Panc1 (cell line): ENCODE measurements at regions of chr5 and their contacts with region 1.

Region 1: GRCh38 chr5:151805414-151806223 is 33.9 kb downstream of the G3BP1 start:
- DNase-seq: no peak
- ATAC-seq: no peak
- H3K4me3 ChIP-seq: no peak overlapping the region
- H3K27ac ChIP-seq: no peak overlapping the region
- H3K4me1 ChIP-seq: no peaks in the 10 kb centered on the region
- H3K27me3 ChIP-seq: no peaks in the 10 kb centered on the region
- CTCF ChIP-seq: no peak

Region 2: DNA sequence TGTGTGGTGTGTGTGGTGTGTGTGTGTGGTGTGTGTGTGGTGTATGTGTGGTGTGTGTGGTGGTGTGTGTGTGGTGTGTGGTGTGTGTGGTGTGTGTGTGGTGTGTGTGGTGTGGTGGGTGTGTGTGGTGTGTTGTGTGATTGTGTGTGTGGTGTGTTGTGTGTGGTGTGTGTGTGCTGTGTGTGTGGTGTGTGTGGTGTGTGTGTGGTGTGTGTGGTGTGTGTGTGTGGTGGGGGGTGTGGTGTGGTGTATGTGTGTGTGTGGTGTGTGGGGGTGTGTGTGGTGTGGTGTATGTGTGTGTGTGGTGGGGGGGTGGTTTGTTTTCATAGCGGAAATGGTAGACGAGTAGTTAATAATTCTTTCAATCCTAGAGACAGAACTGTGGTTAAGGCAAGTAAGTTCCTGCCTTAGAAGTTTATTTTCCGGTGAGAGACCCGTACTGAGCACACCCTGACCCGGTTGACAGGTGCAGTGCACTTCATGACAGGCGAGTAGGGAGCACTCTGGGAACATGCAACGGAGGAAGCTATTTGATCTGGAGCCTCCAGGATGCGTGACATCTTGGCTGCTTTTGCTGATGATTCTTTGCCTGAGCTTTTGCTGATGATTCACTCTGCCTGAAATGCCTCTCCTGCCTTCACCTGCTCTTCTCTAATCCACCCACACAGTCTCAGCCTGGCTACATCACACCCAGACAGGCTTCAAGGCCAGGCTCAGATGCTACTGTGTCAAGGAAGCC is 192.8 kb before region 1 on chr5:
- CTCF ChIA-PET with region 1: no interaction called
- POLR2A ChIA-PET with region 1: no interaction called
- in situ Hi-C with region 1: no loop called
- intact Hi-C with region 1: no loop called
- DNase-seq: no peak
- ATAC-seq: no peak
- H3K4me3 ChIP-seq: no peak overlapping the region
- H3K27ac ChIP-seq: no peak overlapping the region
- H3K4me1 ChIP-seq: 0 out of 2 replicates have a peak, but pooled peaks cover 2% of the 10 kb centered on the region
- H3K27me3 ChIP-seq: no peaks in the 10 kb centered on the region
- CTCF ChIP-seq: no peak

Region 3: DNA sequence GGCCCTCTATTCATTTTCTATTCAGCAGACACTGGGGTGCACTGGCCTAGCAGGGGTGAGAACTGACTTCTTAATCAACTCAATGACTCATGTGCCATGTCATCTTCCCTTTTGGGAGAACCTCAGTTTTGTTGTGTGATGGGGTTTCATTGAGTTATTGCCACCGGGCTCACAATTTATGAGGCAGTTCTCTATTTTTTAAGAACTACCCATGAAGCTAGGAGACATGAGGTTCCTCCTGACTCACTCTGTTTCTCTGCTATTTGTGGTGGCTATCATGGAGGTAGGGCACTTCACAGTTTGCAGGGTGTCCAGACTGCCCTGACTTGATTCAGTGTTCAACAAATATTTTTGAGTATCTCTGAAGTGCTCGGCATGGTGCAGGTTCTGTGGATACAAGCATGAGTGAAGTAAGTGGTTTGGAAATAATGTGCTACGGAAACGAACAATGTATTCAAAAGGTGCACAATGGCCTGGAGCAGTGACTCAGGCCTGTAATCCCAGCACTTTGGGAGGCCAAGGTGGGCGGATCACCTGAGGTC is 158.2 kb before region 1 on chr5:
- CTCF ChIA-PET with region 1: no interaction called
- POLR2A ChIA-PET with region 1: no interaction called
- in situ Hi-C with region 1: no loop called
- intact Hi-C with region 1: no loop called
- DNase-seq: no peak
- ATAC-seq: no peak
- H3K4me3 ChIP-seq: no peak overlapping the region
- H3K27ac ChIP-seq: no peak overlapping the region
- H3K4me1 ChIP-seq: no peaks in the 10 kb centered on the region
- H3K27me3 ChIP-seq: no peaks in the 10 kb centered on the region; the same call in 1 of the 2 replicates
- CTCF ChIP-seq: no peak

Region 4: DNA sequence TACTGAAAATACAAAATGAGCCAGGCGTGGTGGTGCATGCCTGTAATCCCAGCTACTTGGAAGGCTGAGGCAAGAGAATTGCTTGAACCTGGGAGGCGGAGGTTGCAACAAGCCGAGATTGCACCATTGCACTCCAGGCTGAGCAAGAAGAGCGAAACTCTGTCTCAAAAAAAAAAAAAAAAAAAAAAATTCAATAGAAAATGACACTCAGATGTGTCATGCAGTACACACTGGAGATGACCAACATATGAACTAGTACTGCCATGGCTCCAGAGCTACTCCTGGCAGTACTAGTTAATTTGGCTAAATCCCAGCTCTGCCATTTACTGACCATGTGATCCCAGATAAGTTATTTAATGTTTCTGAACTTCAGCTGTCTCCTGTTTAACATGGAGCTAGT is 54.5 kb before region 1 on chr5:
- CTCF ChIA-PET with region 1: no interaction called
- POLR2A ChIA-PET with region 1: interaction called, 12 read pairs
- in situ Hi-C with region 1: no loop called
- intact Hi-C with region 1: no loop called
- DNase-seq: no peak
- ATAC-seq: no peak
- H3K4me3 ChIP-seq: no peak overlapping the region
- H3K27ac ChIP-seq: no peak overlapping the region
- H3K4me1 ChIP-seq: peaks cover 12% of the 10 kb centered on the region
- H3K27me3 ChIP-seq: no peaks in the 10 kb centered on the region
- CTCF ChIP-seq: no peak

Region 5: DNA sequence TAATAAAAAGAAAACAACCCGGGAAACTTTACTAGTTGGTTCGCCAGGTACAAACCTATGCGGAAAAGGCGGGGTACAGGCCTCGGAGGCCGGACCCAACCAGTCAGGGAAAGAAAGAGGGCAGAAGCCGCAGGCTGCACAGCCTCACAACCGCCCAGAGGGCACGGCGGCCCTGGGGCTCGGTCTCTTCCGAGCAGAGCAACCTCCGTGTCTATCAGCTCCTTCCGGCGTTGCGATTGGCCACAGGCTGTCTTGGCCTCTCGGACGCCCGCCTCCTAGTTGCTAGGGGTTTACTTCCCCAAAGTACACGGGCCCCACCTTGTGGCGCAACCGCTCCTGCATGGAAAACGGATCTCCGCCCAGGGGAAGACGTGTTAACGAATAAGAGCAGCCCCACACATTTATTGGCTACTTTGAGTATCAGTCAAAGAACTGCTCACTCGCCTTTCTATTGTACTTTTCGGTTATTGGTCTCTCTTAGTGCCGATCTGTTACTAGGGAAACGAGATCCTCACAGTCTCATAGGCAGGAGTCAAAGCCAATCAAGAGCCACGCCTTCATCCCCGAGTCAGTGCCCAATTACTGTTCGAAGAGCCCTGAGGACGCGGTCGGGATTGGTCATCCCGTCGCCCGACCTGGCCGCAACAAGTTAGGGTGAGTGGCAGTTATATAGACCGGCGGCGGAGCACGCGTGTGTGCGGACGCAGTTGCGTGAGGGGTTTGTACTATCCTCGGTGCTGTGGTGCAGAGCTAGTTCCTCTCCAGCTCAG is 34.2 kb before region 1 on chr5 and contains the start of gene G3BP1:
- CTCF ChIA-PET with region 1: no interaction called
- POLR2A ChIA-PET with region 1: no interaction called
- in situ Hi-C with region 1: no loop called
- intact Hi-C with region 1: no loop called
- DNase-seq: peak; percentile 100
- ATAC-seq: peak; percentile 91
- H3K4me3 ChIP-seq: peak within 1 kb of the TSS; percentile 92 to 97
- H3K27ac ChIP-seq: peak within 1 kb of the TSS; percentile 97
- H3K4me1 ChIP-seq: peaks cover 24% of the 10 kb centered on the region
- H3K27me3 ChIP-seq: no peaks in the 10 kb centered on the region
- CTCF ChIP-seq: peak; percentile 75
- total RNA-seq, gene G3BP1: 290 TPM